Endothelial cell of umbilical vein (primary cell): ENCODE measurements at regions of chr12 and their contacts with region 1.

Region 1: GRCh38 chr12:71392521-71393145 is 47.0 kb upstream of the LGR5 start:
- DNase-seq: peak; percentile 76
- H3K4me3 ChIP-seq: no peak overlapping the region
- H3K27ac ChIP-seq: no peak overlapping the region
- H3K4me1 ChIP-seq: no peaks in the 10 kb centered on the region
- H3K27me3 ChIP-seq: no peaks in the 10 kb centered on the region
- CTCF ChIP-seq: peak; percentile 62 to 73
- POLR2A ChIP-seq: no peak

Region 2: DNA sequence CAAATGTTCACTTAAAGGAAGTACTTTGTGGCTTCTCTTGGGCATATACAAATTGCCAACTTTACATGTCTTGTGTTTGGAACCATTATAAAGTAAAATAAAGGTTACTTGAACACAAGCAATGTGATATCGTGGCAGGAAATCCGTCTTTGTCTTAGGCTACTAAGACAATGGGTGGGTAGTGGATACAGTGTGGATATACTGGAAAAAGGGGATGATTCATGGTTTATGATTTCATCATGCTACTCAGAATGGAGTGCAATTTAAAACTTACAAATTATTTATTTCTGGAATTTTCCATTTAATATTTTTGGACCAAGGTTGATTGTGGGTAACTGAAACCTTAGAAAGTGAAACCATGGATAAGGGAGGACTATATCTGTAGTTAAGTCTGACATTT is 1519.2 kb before region 1 on chr12:
- CTCF ChIA-PET with region 1: no interaction called
- POLR2A ChIA-PET with region 1: no interaction called
- dilution Hi-C with region 1: no loop called
- intact Hi-C with region 1: loop called (anchors 5 kb)
- DNase-seq: peak; percentile 87
- H3K4me3 ChIP-seq: no peak overlapping the region
- H3K27ac ChIP-seq: peak overlapping the region; percentile 68
- H3K4me1 ChIP-seq: peaks cover 14% of the 10 kb centered on the region
- H3K27me3 ChIP-seq: no peaks in the 10 kb centered on the region
- CTCF ChIP-seq: no peak
- POLR2A ChIP-seq: no peak

Region 3: GRCh38 chr12:71128191-71128788 is 264.3 kb before region 1 on chr12:
- CTCF ChIA-PET with region 1: interaction called, 10 read pairs
- POLR2A ChIA-PET with region 1: no interaction called
- dilution Hi-C with region 1: no loop called
- intact Hi-C with region 1: no loop called
- DNase-seq: no peak
- H3K4me3 ChIP-seq: no peak overlapping the region
- H3K27ac ChIP-seq: no peak overlapping the region
- H3K4me1 ChIP-seq: no peaks in the 10 kb centered on the region
- H3K27me3 ChIP-seq: no peaks in the 10 kb centered on the region
- CTCF ChIP-seq: no peak
- POLR2A ChIP-seq: no peak

Region 4: GRCh38 chr12:71216725-71217579 is 175.7 kb before region 1 on chr12:
- CTCF ChIA-PET with region 1: interaction called, 8 read pairs
- POLR2A ChIA-PET with region 1: no interaction called
- dilution Hi-C with region 1: no loop called
- intact Hi-C with region 1: loop called (anchors 1 kb)
- DNase-seq: peak; percentile 34
- H3K4me3 ChIP-seq: no peak overlapping the region
- H3K27ac ChIP-seq: no peak overlapping the region
- H3K4me1 ChIP-seq: no peaks in the 10 kb centered on the region
- H3K27me3 ChIP-seq: peaks cover 0 to 6% of the 10 kb centered on the region in 2 experiments
- CTCF ChIP-seq: peak in 1 of 2 donors; percentile 38
- POLR2A ChIP-seq: no peak

Region 5: DNA sequence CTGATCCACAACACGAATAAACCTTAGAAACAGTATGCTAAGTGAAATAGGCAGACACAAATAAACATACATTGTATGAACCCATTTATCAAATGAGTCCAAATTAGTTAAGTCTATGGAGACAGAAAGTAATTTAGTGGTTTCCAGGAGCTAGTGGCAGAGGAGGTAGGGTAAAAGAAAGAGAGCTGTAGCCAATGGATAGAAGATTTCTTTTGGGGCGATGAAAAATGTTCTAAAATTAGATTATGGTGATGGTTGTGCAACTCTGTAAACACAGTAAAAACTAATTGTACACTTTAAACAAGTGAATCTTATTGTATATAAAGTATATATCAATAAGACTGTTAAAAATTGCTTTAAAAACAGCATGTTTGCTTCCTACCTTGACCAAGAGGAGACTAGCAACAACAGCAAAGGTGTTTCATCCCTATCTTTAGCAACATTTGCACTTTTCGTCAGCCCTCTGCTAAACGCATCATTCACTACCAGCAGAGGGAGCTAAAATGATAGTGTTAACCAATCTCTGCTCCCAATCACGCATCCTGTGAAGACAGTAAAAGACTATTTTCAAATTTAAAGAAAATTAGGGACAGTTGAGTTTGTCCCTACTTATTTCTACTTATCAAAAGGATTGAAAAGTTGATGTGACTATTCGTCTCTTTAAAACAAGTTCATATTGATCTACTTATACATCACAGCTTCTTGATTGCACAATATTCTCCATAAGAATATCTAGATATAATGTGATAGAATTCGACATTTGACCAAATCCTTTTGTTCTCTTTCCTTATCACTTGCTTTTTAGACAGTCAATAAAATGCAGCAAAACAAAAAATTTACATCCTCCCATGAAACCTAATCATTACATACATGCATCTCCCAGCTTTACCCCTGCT is 23.0 kb after region 1 on chr12:
- CTCF ChIA-PET with region 1: interaction called, 11 read pairs
- POLR2A ChIA-PET with region 1: no interaction called
- dilution Hi-C with region 1: no loop called
- intact Hi-C with region 1: no loop called
- DNase-seq: peak; percentile 49
- H3K4me3 ChIP-seq: no peak overlapping the region
- H3K27ac ChIP-seq: no peak overlapping the region
- H3K4me1 ChIP-seq: no peaks in the 10 kb centered on the region
- H3K27me3 ChIP-seq: no peaks in the 10 kb centered on the region
- CTCF ChIP-seq: peak; percentile 55 to 67
- POLR2A ChIP-seq: no peak

Region 6: GRCh38 chr12:71602745-71603577 is 210.3 kb after region 1 on chr12:
- CTCF ChIA-PET with region 1: no interaction called
- POLR2A ChIA-PET with region 1: no interaction called
- dilution Hi-C with region 1: no loop called
- intact Hi-C with region 1: no loop called
- DNase-seq: no peak
- H3K4me3 ChIP-seq: no peak overlapping the region
- H3K27ac ChIP-seq: no peak overlapping the region
- H3K4me1 ChIP-seq: no peaks in the 10 kb centered on the region
- H3K27me3 ChIP-seq: peaks cover 0 to 6% of the 10 kb centered on the region in 2 experiments
- CTCF ChIP-seq: no peak
- POLR2A ChIP-seq: no peak